PC-9 (cell line): ENCODE measurements at regions of chr15 and their contacts with region 1.

Region 1: DNA sequence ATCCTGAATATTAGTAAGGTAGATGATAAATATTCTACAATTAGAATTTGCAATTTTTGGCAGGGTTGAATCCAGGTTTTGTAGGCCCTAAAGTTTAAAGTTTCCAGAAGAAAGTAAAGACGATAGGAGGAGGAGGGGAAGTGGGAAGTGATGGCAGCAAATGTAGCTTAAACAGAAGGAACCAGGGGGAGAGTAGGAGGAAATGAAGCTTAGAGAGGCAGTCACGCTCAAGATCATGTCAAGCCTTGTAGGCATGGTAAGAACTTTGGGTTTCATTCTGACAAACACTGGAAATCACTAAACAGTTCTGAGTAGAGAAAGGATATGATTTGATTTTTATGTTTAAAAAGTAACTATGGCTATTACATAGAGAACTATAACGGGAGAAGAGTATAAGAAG is 63.9 kb downstream of the NR2E3 start:
- DNase-seq: no peak
- H3K4me3 ChIP-seq: no peak overlapping the region
- H3K27ac ChIP-seq: no peak overlapping the region
- H3K4me1 ChIP-seq: no peaks in the 10 kb centered on the region
- H3K27me3 ChIP-seq: no peaks in the 10 kb centered on the region
- CTCF ChIP-seq: no peak

Region 2: GRCh38 chr15:72136170-72137051 is 262.2 kb after region 1 on chr15:
- CTCF ChIA-PET with region 1: interaction called, 17 read pairs
- POLR2A ChIA-PET with region 1: no interaction called
- intact Hi-C with region 1: no loop called
- DNase-seq: no peak
- H3K4me3 ChIP-seq: no peak overlapping the region
- H3K27ac ChIP-seq: no peak overlapping the region
- H3K4me1 ChIP-seq: no peaks in the 10 kb centered on the region
- H3K27me3 ChIP-seq: no peaks in the 10 kb centered on the region
- CTCF ChIP-seq: no peak